Common myeloid progenitor, CD34-positive (primary cell): ENCODE measurements at regions of chr6 and their contacts with region 1.

Region 1: GRCh38 chr6:24720604-24721460 is 1.9 kb upstream of the C6orf62 start:
- DNase-seq: peak; percentile 100
- H3K4me3 ChIP-seq: peak overlapping the region; percentile 89 to 100 (median 94)
- H3K27ac ChIP-seq: peak overlapping the region; percentile 99 to 100
- H3K4me1 ChIP-seq: peaks cover 26 to 44% (median 36%) of the 10 kb centered on the region in 4 experiments
- H3K27me3 ChIP-seq: no peaks in the 10 kb centered on the region

Region 2: DNA sequence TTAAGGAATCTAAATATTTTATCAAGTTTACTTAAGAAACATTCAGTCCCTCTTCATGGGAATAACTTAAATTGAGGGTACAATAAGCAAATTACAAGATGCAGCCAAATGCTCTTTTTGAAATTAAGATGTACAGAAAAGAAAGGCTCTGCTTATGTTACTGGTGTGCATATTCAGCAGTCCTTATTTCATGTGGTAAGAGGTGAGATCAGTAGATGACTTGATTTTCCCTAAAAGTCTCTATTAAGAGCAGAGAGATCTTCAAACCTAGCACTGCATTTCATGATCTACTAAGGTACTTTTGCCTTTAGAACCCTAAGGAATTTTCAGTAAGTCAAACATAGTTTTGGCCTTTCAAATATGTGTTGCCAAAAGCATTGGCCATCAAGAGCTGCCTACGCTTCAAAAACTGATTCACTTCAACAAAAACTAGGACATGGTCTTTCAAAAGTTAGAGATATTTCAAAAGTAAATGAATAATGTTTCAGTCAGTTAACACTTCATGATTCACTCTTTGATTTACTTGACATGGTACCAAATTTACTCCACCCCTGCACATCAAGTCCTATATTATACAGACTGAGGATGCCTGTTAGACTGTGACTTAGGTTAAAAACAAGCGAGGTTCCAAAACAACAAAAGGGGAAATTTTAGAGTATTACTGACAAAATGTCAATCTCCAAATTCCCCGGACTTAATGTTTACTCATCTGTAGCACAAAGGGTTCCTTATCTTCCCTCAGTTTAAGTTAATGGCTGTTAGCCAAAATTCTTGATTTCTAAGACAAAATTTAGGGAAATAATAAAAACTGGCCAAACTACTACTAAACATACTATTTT is 21.1 kb before region 1 on chr6:
- CTCF ChIA-PET with region 1: interaction called, 16 read pairs
- POLR2A ChIA-PET with region 1: no interaction called
- DNase-seq: no peak
- H3K4me3 ChIP-seq: no peak overlapping the region
- H3K27ac ChIP-seq: no peak overlapping the region
- H3K4me1 ChIP-seq: no peaks in the 10 kb centered on the region
- H3K27me3 ChIP-seq: no peaks in the 10 kb centered on the region

Region 3: GRCh38 chr6:25070547-25071366 is 349.9 kb after region 1 on chr6:
- CTCF ChIA-PET with region 1: no interaction called
- POLR2A ChIA-PET with region 1: no interaction called
- DNase-seq: peak; percentile 88 to 94 (median 93)
- H3K4me3 ChIP-seq: peak overlapping the region in 1 of 7 experiments; percentile 42
- H3K27ac ChIP-seq: peak overlapping the region in 1 of 2 experiments; percentile 26
- H3K4me1 ChIP-seq: peaks cover 0 to 7% (median 1%) of the 10 kb centered on the region in 4 experiments
- H3K27me3 ChIP-seq: no peaks in the 10 kb centered on the region